ENCODE measurements at regions of chr12 and their contacts with region 1.

Region 1: DNA sequence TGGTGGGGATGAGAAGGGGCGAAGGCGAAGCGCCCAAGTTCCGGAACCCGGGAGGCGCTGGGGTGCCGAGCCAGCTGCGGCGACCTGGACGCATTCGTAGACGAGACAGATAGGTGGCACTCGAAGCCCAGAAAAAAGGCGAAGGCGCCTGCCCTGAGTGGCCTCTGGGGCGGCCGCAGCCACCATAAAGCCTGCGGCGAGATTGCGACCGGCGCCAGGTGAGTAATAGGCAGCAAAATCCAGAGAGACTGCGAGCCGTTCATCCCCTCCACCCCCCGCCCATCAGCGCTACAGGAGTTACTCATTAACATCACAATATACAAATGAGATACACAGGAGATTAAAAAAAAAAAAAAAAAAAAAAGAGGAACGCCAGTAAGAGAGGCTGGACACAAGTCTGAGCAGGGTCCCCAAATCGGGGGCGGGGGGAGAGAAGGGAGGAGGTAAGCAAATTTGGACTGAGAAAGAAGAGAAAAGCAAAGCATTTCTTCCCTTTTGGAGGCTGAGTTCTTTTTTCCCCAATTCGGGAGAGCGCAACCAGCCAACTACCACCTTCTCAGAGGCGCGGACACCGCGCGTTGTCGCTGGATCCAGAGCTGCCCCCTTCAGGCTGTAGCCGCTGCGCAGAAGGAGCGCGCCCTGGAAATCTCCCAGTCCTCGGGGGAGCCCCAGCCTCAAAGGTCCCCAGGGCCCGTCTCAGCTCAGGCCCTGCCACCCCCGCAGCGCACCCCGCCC is 15.7 kb downstream of the TBX3 start:
- DNase-seq: peak; percentile 84
- ATAC-seq: peak; percentile 59
- H3K4me3 ChIP-seq: peak overlapping the region; percentile 40
- H3K27ac ChIP-seq: peak overlapping the region; percentile 89
- H3K4me1 ChIP-seq: peaks cover 4% of the 10 kb centered on the region
- H3K27me3 ChIP-seq: no peaks in the 10 kb centered on the region
- CTCF ChIP-seq: peak; percentile 75
- POLR2A ChIP-seq: peak; percentile 23; the same call in 1 of the 2 replicates
- RAD21 ChIP-seq: peak; percentile 84

Region 2: GRCh38 chr12:114579389-114579788 is 88.9 kb before region 1 on chr12:
- CTCF ChIA-PET with region 1: no interaction called
- POLR2A ChIA-PET with region 1: no interaction called
- dilution Hi-C with region 1: no loop called
- in situ Hi-C with region 1: no loop called
- intact Hi-C with region 1: no loop called
- DNase-seq: no peak
- ATAC-seq: no peak
- H3K4me3 ChIP-seq: no peak overlapping the region
- H3K27ac ChIP-seq: no peak overlapping the region
- H3K4me1 ChIP-seq: no peaks in the 10 kb centered on the region
- H3K27me3 ChIP-seq: no peaks in the 10 kb centered on the region; the same call in none of the 2 replicates
- CTCF ChIP-seq: no peak
- POLR2A ChIP-seq: no peak
- RAD21 ChIP-seq: no peak

Region 3: DNA sequence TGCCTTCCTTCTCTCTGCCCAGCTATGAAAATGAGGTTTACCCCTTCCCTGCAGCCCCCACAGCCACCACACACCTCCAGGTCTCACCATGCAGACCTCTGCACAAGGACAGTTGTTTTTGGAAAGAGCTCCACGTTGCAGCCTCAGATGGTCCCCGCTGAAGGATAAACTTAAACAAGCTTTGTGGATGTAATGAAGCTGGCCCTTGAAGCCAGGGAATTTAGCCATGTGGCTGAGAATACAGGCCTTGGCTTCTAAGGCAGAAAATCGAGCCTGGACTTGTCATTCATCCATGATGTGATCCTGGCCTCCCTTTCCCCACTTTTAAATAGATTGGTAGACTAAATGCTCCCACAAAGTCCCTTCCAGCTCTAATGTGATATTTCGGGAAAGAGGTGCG is 63.7 kb before region 1 on chr12:
- CTCF ChIA-PET with region 1: no interaction called
- POLR2A ChIA-PET with region 1: no interaction called
- dilution Hi-C with region 1: no loop called
- in situ Hi-C with region 1: no loop called
- intact Hi-C with region 1: no loop called
- DNase-seq: no peak
- ATAC-seq: peak; percentile 44
- H3K4me3 ChIP-seq: no peak overlapping the region
- H3K27ac ChIP-seq: no peak overlapping the region
- H3K4me1 ChIP-seq: peaks cover 1% of the 10 kb centered on the region; the same call in 1 of the 2 replicates
- H3K27me3 ChIP-seq: peaks cover 3% of the 10 kb centered on the region
- CTCF ChIP-seq: no peak
- POLR2A ChIP-seq: no peak
- RAD21 ChIP-seq: no peak

Region 4: GRCh38 chr12:114691763-114692557 is 23.6 kb after region 1 on chr12:
- CTCF ChIA-PET with region 1: no interaction called
- POLR2A ChIA-PET with region 1: no interaction called
- dilution Hi-C with region 1: no loop called
- in situ Hi-C with region 1: no loop called
- intact Hi-C with region 1: no loop called
- DNase-seq: no peak
- ATAC-seq: peak; percentile 27
- H3K4me3 ChIP-seq: peak overlapping the region; percentile 76
- H3K27ac ChIP-seq: peak overlapping the region; percentile 83
- H3K4me1 ChIP-seq: peaks cover 24% of the 10 kb centered on the region
- H3K27me3 ChIP-seq: no peaks in the 10 kb centered on the region
- CTCF ChIP-seq: no peak
- POLR2A ChIP-seq: no peak; the same call in 1 of the 2 replicates
- RAD21 ChIP-seq: no peak

Region 5: DNA sequence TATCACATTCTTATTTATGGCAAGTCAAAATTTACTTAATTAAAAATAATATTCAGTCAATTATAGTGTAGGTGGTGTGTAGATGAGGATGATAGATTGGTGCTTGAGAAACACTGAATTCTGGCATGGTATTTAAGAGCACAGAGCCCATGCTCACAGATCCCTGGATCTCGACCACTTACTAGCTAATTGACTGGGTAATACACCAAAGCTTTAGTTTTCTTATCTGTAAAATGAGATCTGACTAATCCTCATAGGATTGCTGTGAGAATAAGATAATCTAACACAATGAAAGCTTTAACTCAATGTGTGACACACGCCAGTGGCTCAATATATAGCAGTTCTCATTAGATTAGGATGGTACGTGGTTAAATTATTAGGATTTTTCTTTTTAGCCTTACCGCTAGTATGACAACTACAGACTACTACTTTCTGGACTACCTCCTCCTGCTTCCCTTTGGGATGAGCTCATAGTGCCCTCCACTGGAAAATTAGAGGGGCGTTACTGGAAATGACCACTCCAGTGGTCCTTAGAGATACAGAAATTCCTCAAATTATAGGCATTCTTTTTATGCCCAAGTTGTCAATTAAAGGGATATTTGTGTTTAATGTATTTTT is 498.5 kb after region 1 on chr12:
- CTCF ChIA-PET with region 1: interaction called, 4 read pairs
- POLR2A ChIA-PET with region 1: no interaction called
- dilution Hi-C with region 1: no loop called
- in situ Hi-C with region 1: no loop called
- intact Hi-C with region 1: loop called (anchors 1 kb)
- DNase-seq: peak; percentile 47
- ATAC-seq: peak; percentile 68
- H3K4me3 ChIP-seq: no peak overlapping the region
- H3K27ac ChIP-seq: no peak overlapping the region
- H3K4me1 ChIP-seq: no peaks in the 10 kb centered on the region; the same call in 1 of the 2 replicates
- H3K27me3 ChIP-seq: no peaks in the 10 kb centered on the region
- CTCF ChIP-seq: peak; percentile 42
- POLR2A ChIP-seq: no peak
- RAD21 ChIP-seq: peak; percentile 57

Measured in IMR-90 (cell line).